ENCODE measurements at regions of chr11 and their contacts with region 1.

Region 1: GRCh38 chr11:31690041-31690440 is 121.1 kb downstream of the PAX6 start:
- DNase-seq: peak; percentile 5
- H3K4me3 ChIP-seq: no peak overlapping the region
- H3K27ac ChIP-seq: no peak overlapping the region
- H3K4me1 ChIP-seq: peaks cover 8% of the 10 kb centered on the region
- H3K27me3 ChIP-seq: no peaks in the 10 kb centered on the region
- CTCF ChIP-seq: no peak
- POLR2A ChIP-seq: no peak

Region 2: GRCh38 chr11:31702966-31703365 is 12.9 kb after region 1 on chr11:
- CTCF ChIA-PET with region 1: interaction called, 12 read pairs
- POLR2A ChIA-PET with region 1: no interaction called
- dilution Hi-C with region 1: no loop called
- intact Hi-C with region 1: no loop called
- DNase-seq: no peak
- H3K4me3 ChIP-seq: no peak overlapping the region
- H3K27ac ChIP-seq: no peak overlapping the region
- H3K4me1 ChIP-seq: no peaks in the 10 kb centered on the region
- H3K27me3 ChIP-seq: no peaks in the 10 kb centered on the region
- CTCF ChIP-seq: no peak
- POLR2A ChIP-seq: no peak

Measured in endothelial cell of umbilical vein (primary cell).